ENCODE measurements at regions of chr17 and their contacts with region 1.

Region 1: DNA sequence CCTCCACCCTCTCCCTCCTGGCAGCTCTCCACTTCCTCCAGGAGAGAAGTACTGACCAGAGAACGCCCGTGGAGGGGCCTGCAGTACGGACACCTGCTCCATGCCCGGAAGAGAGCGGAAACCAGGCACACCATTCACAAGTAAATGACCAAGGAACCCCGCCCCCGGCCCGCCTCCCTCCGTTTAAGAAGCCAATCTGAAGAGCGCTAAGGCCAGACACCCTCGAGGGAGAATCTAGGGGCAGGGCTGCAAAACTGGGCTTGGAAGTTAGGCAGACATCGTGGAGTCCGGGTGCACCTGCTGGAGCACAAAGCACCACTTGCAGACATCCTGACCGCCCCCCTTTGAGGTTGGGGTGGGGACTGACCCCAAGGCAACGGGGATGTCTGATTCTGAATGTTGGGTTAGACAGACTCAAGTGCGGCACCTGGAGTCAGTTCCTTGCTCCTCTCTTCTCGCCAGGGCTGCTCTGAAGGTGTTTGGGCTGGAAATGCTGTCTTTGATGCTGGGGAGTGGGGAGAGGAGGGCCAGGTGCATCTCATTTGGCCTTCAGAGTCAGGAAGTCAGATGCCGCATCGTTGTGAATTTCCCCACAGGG is 964 bp upstream of the FAAP100 start:
- DNase-seq: peak; percentile 85
- ATAC-seq: peak; percentile 67
- H3K4me3 ChIP-seq: peak overlapping the region; percentile 77
- H3K27ac ChIP-seq: peak overlapping the region; percentile 64
- H3K4me1 ChIP-seq: peaks cover 41% of the 10 kb centered on the region
- H3K27me3 ChIP-seq: no peaks in the 10 kb centered on the region
- CTCF ChIP-seq: peak; percentile 33; the same call in 1 of the 2 replicates

Region 2: DNA sequence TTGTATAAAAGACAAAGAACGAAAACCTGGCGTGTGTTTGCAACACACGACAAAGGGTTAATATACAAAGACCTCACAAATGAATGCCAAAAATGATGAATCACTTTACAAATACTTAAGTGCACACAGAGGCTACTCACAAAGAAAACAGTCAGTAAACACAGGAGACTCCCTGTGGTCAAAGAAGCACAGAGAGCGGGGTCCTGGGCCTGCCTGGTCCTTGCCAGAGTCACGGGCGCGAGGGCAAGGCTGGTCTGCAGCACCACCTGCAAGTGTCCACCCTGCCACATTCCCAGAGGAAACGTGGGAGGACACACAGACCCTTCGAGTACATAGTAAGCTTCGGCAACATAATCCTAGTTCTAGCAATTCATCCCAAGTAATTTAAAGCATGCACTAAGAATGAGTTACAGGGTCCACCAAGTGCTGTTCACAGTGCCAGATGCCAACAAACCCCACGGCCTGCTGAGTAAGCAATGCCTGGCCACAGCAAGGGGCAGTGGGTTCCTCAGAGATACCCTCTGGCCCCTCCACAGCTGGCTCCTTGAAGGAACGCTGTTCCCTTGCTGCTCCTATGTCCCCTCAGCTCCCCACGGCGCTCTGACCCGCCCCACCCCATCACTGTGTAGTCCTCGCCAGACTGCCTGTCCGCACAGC is 23.6 kb after region 1 on chr17:
- CTCF ChIA-PET with region 1: no interaction called
- POLR2A ChIA-PET with region 1: interaction called, 5 read pairs
- intact Hi-C with region 1: loop called (anchors 1 kb)
- DNase-seq: peak; percentile 95
- ATAC-seq: peak; percentile 97
- H3K4me3 ChIP-seq: peak overlapping the region; percentile 23; the same call in 1 of the 2 replicates
- H3K27ac ChIP-seq: peak overlapping the region; percentile 73
- H3K4me1 ChIP-seq: peaks cover 32% of the 10 kb centered on the region
- H3K27me3 ChIP-seq: no peaks in the 10 kb centered on the region
- CTCF ChIP-seq: 0 out of 2 replicates have a peak, but pooled peaks have one; percentile 10

Region 3: GRCh38 chr17:81601525-81602120 is 48.5 kb after region 1 on chr17:
- CTCF ChIA-PET with region 1: no interaction called
- POLR2A ChIA-PET with region 1: interaction called, 28 read pairs
- intact Hi-C with region 1: loop called (anchors 2 kb)
- DNase-seq: peak; percentile 84
- ATAC-seq: peak; percentile 99
- H3K4me3 ChIP-seq: no peak overlapping the region
- H3K27ac ChIP-seq: no peak overlapping the region
- H3K4me1 ChIP-seq: no peaks in the 10 kb centered on the region
- H3K27me3 ChIP-seq: no peaks in the 10 kb centered on the region
- CTCF ChIP-seq: peak; percentile 92

Measured in PC-3 (cell line).